Naive thymus-derived CD4-positive, alpha-beta T cell (primary cell): ENCODE measurements at regions of chr19 and their contacts with region 1.

Region 1: GRCh38 chr19:41263850-41264580 is at the start of gene HNRNPUL1:
- DNase-seq: peak; percentile 99 to 100 (median 100)
- ATAC-seq: peak; percentile 76
- H3K4me3 ChIP-seq: peak within 1 kb of the TSS; percentile 84
- H3K4me3 Mint-ChIP-seq: peak within 1 kb of the TSS; percentile 95 to 100 (median 98)
- H3K27ac ChIP-seq: peak within 1 kb of the TSS; percentile 99
- H3K27ac Mint-ChIP-seq: peak within 1 kb of the TSS; percentile 99 to 100 (median 100)
- H3K4me1 ChIP-seq: peaks cover 22 to 30% of the 10 kb centered on the region in 2 donors
- H3K4me1 Mint-ChIP-seq: peaks cover 33 to 61% (median 41%) of the 10 kb centered on the region in 7 donors
- H3K27me3 ChIP-seq: no peaks in the 10 kb centered on the region
- H3K27me3 Mint-ChIP-seq: peaks cover 0 to 8% (median 0%) of the 10 kb centered on the region in 5 donors
- total RNA-seq, gene HNRNPUL1: 253 to 319 (median 280) TPM

Region 2: GRCh38 chr19:40444192-40445028 is 819.6 kb before region 1 on chr19 and contains the start of gene SERTAD3:
- CTCF ChIA-PET with region 1: no interaction called
- POLR2A ChIA-PET with region 1: no interaction called
- intact Hi-C with region 1: loop called in 1 of 2 experiments (anchors 5 kb)
- DNase-seq: peak; percentile 94 to 99 (median 98)
- ATAC-seq: peak; percentile 82
- H3K4me3 ChIP-seq: peak within 1 kb of the TSS; percentile 97
- H3K4me3 Mint-ChIP-seq: peak within 1 kb of the TSS; percentile 96 to 100 (median 98)
- H3K27ac ChIP-seq: peak within 1 kb of the TSS; percentile 89
- H3K27ac Mint-ChIP-seq: peak within 1 kb of the TSS; percentile 94 to 99 (median 97)
- H3K4me1 ChIP-seq: peaks cover 8 to 12% of the 10 kb centered on the region in 2 donors
- H3K4me1 Mint-ChIP-seq: peaks cover 17 to 31% (median 21%) of the 10 kb centered on the region in 7 donors
- H3K27me3 ChIP-seq: no peaks in the 10 kb centered on the region
- H3K27me3 Mint-ChIP-seq: no peaks in the 10 kb centered on the region
- total RNA-seq, gene SERTAD3: 15.2 to 44.1 (median 17.8) TPM

Region 3: GRCh38 chr19:40716655-40717324 is 547.2 kb before region 1 on chr19 and contains the starts of genes COQ8B and ITPKC:
- CTCF ChIA-PET with region 1: no interaction called
- POLR2A ChIA-PET with region 1: interaction called, 3 read pairs
- intact Hi-C with region 1: loop called in 1 of 2 experiments (anchors 2 kb)
- DNase-seq: peak; percentile 96 to 100 (median 99)
- ATAC-seq: peak; percentile 88
- H3K4me3 ChIP-seq: peak within 1 kb of the TSS; percentile 75
- H3K4me3 Mint-ChIP-seq: peak within 1 kb of the TSS; percentile 87 to 99 (median 94)
- H3K27ac ChIP-seq: peak within 1 kb of the TSS; percentile 92
- H3K27ac Mint-ChIP-seq: peak within 1 kb of the TSS; percentile 94 to 99 (median 97)
- H3K4me1 ChIP-seq: peaks cover 39 to 44% of the 10 kb centered on the region in 2 donors
- H3K4me1 Mint-ChIP-seq: peaks cover 42 to 74% (median 67%) of the 10 kb centered on the region in 7 donors
- H3K27me3 ChIP-seq: no peaks in the 10 kb centered on the region
- H3K27me3 Mint-ChIP-seq: no peaks in the 10 kb centered on the region
- total RNA-seq, gene COQ8B: 26.2 to 48.3 (median 43.8) TPM
- total RNA-seq, gene ITPKC: 4.9 to 9.0 (median 7.3) TPM

Region 4: GRCh38 chr19:41123716-41124294 is 140.2 kb before region 1 on chr19:
- CTCF ChIA-PET with region 1: interaction called, 3 read pairs
- POLR2A ChIA-PET with region 1: interaction called, 4 read pairs
- intact Hi-C with region 1: loop called (anchors 1 to 2 kb)
- DNase-seq: no peak
- ATAC-seq: no peak
- H3K4me3 ChIP-seq: no peak overlapping the region
- H3K4me3 Mint-ChIP-seq: no peak overlapping the region
- H3K27ac ChIP-seq: no peak overlapping the region
- H3K27ac Mint-ChIP-seq: peak overlapping the region; percentile 9 to 95 (median 88)
- H3K4me1 ChIP-seq: peaks cover 26 to 31% of the 10 kb centered on the region in 2 donors
- H3K4me1 Mint-ChIP-seq: peaks cover 21 to 49% (median 44%) of the 10 kb centered on the region in 7 donors
- H3K27me3 ChIP-seq: no peaks in the 10 kb centered on the region
- H3K27me3 Mint-ChIP-seq: peaks cover 0 to 14% (median 0%) of the 10 kb centered on the region in 5 donors

Region 5: GRCh38 chr19:41245843-41246242 is 18.2 kb before region 1 on chr19:
- CTCF ChIA-PET with region 1: no interaction called
- POLR2A ChIA-PET with region 1: no interaction called
- intact Hi-C with region 1: no loop called
- DNase-seq: no peak
- ATAC-seq: no peak
- H3K4me3 ChIP-seq: no peak overlapping the region
- H3K4me3 Mint-ChIP-seq: no peak overlapping the region
- H3K27ac ChIP-seq: no peak overlapping the region
- H3K27ac Mint-ChIP-seq: no peak overlapping the region
- H3K4me1 ChIP-seq: no peaks in the 10 kb centered on the region
- H3K4me1 Mint-ChIP-seq: peaks cover 0 to 1% (median 0%) of the 10 kb centered on the region in 7 donors
- H3K27me3 ChIP-seq: no peaks in the 10 kb centered on the region
- H3K27me3 Mint-ChIP-seq: no peaks in the 10 kb centered on the region

Region 6: DNA sequence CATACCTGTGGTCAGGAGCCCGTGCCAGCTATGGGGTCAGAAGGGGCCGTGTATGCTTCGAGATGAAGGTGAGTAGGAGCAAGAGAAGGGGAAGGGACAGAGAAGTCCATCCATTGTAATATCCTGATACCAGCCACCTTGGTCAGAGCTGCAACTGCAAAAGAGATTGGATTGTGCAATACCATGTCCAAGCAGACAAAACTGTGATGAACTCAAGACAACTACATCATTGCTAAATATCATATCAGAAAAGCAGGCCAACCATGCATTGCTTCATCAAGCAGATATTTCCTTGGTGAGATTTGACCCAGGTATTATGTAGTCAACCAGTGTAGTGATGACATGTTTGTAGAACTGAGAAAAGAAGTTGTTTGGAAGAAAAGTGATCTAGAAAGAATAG is 12.2 kb after region 1 on chr19:
- CTCF ChIA-PET with region 1: interaction called, 4 read pairs
- POLR2A ChIA-PET with region 1: interaction called, 14 read pairs
- intact Hi-C with region 1: no loop called
- DNase-seq: no peak
- ATAC-seq: no peak
- H3K4me3 ChIP-seq: no peak overlapping the region
- H3K4me3 Mint-ChIP-seq: no peak overlapping the region
- H3K27ac ChIP-seq: no peak overlapping the region
- H3K27ac Mint-ChIP-seq: peak overlapping the region in 4 of 9 donors; percentile 8 to 91 (median 32)
- H3K4me1 ChIP-seq: no peaks in the 10 kb centered on the region
- H3K4me1 Mint-ChIP-seq: peaks cover 4 to 18% (median 8%) of the 10 kb centered on the region in 7 donors
- H3K27me3 ChIP-seq: no peaks in the 10 kb centered on the region
- H3K27me3 Mint-ChIP-seq: no peaks in the 10 kb centered on the region

Region 7: DNA sequence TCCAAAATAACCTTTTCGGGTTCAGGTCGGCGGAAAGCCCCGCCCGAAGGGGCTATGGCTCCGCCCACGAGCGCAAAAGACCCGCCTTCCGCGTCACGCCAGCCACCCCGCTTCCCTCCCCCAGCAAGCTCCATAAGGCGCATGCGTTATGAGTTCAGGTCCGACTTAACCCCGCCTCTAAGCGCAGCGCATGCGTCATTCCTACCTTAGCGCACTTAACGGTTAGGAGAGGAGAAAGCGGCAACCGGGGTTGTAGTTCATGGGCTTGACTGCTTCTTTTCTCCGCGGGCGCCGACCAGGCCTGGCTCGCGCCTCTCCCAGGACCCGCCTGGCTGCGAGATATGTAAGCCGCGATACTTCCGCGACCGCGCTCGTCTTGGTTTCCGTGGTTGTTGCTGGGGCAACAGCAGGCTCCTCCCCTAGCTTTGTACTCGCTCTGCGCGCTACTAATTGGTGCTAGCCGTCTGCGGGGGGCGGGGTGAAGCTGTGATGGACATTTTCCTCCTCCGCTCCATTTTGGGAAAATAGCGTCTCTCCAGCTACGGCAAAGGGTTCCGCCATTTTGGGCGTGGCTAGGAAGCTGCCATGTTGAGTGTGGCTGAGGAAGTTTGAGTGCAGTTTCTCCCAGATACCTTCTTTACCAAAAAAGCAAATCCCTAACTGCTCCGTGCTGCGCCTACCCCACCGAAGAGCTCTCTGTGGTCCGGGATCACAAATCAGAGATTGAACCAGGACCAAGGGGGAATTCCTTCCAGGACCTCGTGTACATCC is 99.9 kb after region 1 on chr19 and contains the start of gene B9D2:
- CTCF ChIA-PET with region 1: no interaction called
- POLR2A ChIA-PET with region 1: interaction called, 65 read pairs
- intact Hi-C with region 1: loop called (anchors 1 kb)
- DNase-seq: peak; percentile 91 to 99 (median 98)
- ATAC-seq: peak; percentile 96
- H3K4me3 ChIP-seq: peak within 1 kb of the TSS; percentile 98
- H3K4me3 Mint-ChIP-seq: peak within 1 kb of the TSS; percentile 82 to 100 (median 98)
- H3K27ac ChIP-seq: peak within 1 kb of the TSS; percentile 99
- H3K27ac Mint-ChIP-seq: peak within 1 kb of the TSS; percentile 96 to 100 (median 99)
- H3K4me1 ChIP-seq: peaks cover 15 to 21% of the 10 kb centered on the region in 2 donors
- H3K4me1 Mint-ChIP-seq: peaks cover 14 to 51% (median 41%) of the 10 kb centered on the region in 7 donors
- H3K27me3 ChIP-seq: no peaks in the 10 kb centered on the region
- H3K27me3 Mint-ChIP-seq: no peaks in the 10 kb centered on the region
- total RNA-seq, gene B9D2: 11.6 to 38.9 (median 12.5) TPM

Region 8: GRCh38 chr19:41859618-41860418 is 595.8 kb after region 1 on chr19 and contains the start of gene RPS19:
- CTCF ChIA-PET with region 1: no interaction called
- POLR2A ChIA-PET with region 1: interaction called, 3 read pairs
- intact Hi-C with region 1: loop called in 1 of 2 experiments (anchors 2 kb)
- DNase-seq: peak; percentile 95 to 99 (median 98)
- ATAC-seq: peak; percentile 92
- H3K4me3 ChIP-seq: peak within 1 kb of the TSS; percentile 90
- H3K4me3 Mint-ChIP-seq: peak within 1 kb of the TSS; percentile 86 to 95 (median 93)
- H3K27ac ChIP-seq: peak within 1 kb of the TSS; percentile 89
- H3K27ac Mint-ChIP-seq: peak within 1 kb of the TSS; percentile 91 to 98 (median 95)
- H3K4me1 ChIP-seq: peaks cover 39 to 43% of the 10 kb centered on the region in 2 donors
- H3K4me1 Mint-ChIP-seq: peaks cover 34 to 47% (median 41%) of the 10 kb centered on the region in 7 donors
- H3K27me3 ChIP-seq: no peaks in the 10 kb centered on the region
- H3K27me3 Mint-ChIP-seq: peaks cover 0 to 9% (median 0%) of the 10 kb centered on the region in 5 donors
- total RNA-seq, gene RPS19: 2,739 to 3,712 (median 3,396) TPM